Activated CD8-positive, alpha-beta T cell treated with anti-CD3 and anti-CD28 coated beads for 36 hours (primary cell): ENCODE measurements at regions of chr10 and their contacts with region 1.

Region 1: GRCh38 chr10:24920907-24921881 is 31.2 kb downstream of the PRTFDC1 start:
- DNase-seq: peak; percentile 89
- ATAC-seq: peak; percentile 88
- H3K4me3 Mint-ChIP-seq: peak overlapping the region; percentile 36
- H3K27ac Mint-ChIP-seq: peak overlapping the region; percentile 90
- H3K4me1 Mint-ChIP-seq: peaks cover 23% of the 10 kb centered on the region
- H3K27me3 Mint-ChIP-seq: no peaks in the 10 kb centered on the region
- CTCF ChIP-seq: no peak

Region 2: GRCh38 chr10:24887855-24888231 is 33.4 kb before region 1 on chr10:
- CTCF ChIA-PET with region 1: no interaction called
- POLR2A ChIA-PET with region 1: interaction called, 3 read pairs
- intact Hi-C with region 1: loop called (anchors 5 kb)
- DNase-seq: peak; percentile 21
- ATAC-seq: peak; percentile 26
- H3K4me3 Mint-ChIP-seq: peak overlapping the region; percentile 67
- H3K27ac Mint-ChIP-seq: peak overlapping the region; percentile 94
- H3K4me1 Mint-ChIP-seq: peaks cover 56% of the 10 kb centered on the region
- H3K27me3 Mint-ChIP-seq: no peaks in the 10 kb centered on the region
- CTCF ChIP-seq: no peak

Region 3: GRCh38 chr10:25117757-25118156 is 196.6 kb after region 1 on chr10:
- CTCF ChIA-PET with region 1: no interaction called
- POLR2A ChIA-PET with region 1: no interaction called
- intact Hi-C with region 1: no loop called
- DNase-seq: no peak
- ATAC-seq: no peak
- H3K4me3 Mint-ChIP-seq: no peak overlapping the region
- H3K27ac Mint-ChIP-seq: no peak overlapping the region
- H3K4me1 Mint-ChIP-seq: no peaks in the 10 kb centered on the region
- H3K27me3 Mint-ChIP-seq: peaks cover 34% of the 10 kb centered on the region
- CTCF ChIP-seq: no peak